ENCODE measurements at regions of chr7 and their contacts with region 1.

Region 1: DNA sequence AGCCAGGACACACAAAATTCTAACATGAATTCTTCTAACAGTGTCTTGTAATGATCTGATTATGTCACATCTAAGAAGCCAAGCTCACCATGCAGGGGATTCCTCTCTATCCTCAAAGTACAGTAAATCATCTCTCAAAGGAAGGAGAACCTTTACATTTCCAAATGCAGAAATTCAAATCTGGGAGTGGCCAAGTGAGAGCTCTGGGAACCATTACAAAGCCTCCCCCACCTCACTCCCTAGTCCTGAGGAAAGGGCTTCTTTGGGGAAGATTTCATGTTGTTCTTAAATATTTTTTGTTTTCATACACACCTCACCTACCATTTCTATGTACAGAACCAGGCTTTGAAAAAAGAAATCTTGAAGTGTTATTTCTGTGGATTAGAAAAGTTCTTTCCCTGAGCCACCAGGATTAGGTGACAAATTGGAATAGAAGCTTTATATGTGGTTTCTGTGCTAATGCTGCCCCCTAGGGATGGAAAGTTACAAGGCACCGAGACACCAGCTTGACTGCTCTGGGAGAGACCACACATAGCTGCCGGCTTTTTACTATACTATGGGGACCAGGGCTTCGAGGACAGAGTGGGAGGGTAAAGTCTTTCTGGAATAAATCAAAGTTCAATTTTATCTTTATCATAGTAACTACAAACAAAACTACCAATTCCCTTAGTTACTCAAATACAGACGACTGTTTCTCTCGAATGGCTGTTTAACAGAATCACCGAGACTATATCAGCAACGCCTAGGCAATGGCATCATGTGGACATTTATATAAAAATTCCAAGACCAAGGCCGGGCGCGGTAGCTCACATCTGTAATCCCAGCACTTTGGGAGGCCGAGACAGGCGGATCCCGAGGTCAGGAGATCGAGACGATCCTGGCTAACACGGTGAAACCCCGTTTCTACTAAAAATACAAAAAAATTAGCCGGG is 116.1 kb downstream of the RNF216 start:
- DNase-seq: peak; percentile 44
- H3K4me3 ChIP-seq: no peak overlapping the region
- H3K27ac ChIP-seq: no peak overlapping the region
- H3K27me3 ChIP-seq: no peaks in the 10 kb centered on the region
- CTCF ChIP-seq: peak; percentile 86

Region 2: DNA sequence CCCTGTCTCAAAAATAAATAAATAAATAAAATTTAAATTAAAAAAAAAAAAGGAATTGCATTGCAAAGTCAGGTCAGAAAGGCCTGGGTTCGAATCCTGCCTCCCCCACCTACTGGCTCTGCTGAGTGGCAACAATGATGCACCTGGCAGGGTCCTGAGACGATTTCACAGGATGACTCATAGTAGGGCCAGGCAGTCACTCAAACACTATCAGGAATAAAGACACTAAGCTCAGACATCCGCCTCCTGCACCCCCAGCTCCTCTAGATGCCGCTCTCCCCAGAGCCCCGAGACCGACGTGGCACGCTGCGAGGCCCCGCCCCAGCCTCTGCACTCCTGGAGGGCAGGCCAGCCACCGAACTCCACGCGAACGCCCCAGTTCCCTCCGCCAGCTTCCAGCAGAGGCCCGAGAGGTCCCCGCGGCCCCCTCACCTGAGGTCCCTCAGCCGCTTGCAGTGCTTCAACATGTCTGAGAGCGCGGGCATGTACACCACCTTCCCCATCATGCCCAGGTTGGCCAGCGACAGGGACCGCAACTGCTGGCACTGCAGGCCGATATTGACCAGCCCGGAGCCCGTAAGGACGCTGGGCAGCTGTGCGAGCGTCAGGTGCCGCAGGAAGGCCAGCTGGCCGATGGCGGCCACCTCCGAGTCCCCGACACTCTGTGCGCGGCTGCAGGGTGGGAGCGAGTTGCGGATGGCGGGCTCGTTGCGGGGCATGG is 165.1 kb before region 1 on chr7:
- CTCF ChIA-PET with region 1: interaction called, 50 read pairs
- POLR2A ChIA-PET with region 1: interaction called, 12 read pairs
- DNase-seq: no peak
- H3K4me3 ChIP-seq: no peak overlapping the region
- H3K27ac ChIP-seq: no peak overlapping the region
- H3K27me3 ChIP-seq: no peaks in the 10 kb centered on the region
- CTCF ChIP-seq: no peak

Region 3: DNA sequence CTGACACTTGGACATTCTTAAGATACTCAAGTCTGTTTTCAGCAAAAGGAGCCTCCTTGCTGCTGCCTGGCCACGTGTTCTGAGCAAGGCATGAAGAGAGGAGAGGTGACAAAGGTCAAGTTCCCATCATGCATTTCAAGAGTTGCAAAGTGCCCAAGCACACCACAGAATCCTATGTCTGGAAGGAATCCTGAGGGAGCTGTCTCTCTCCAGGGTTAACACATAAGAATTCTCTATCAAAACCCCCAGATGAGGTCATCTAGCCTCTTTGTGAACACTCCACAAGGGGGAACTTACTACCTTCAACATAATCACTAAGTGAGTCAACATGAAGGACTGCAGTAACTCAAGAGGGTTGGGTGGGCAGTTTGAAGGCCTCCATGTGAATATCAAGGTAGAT is 39.4 kb before region 1 on chr7:
- CTCF ChIA-PET with region 1: interaction called, 10 read pairs
- POLR2A ChIA-PET with region 1: no interaction called
- DNase-seq: peak; percentile 74
- H3K4me3 ChIP-seq: no peak overlapping the region
- H3K27ac ChIP-seq: peak overlapping the region; percentile 77
- H3K27me3 ChIP-seq: no peaks in the 10 kb centered on the region
- CTCF ChIP-seq: peak; percentile 44

Region 4: GRCh38 chr7:5646852-5647251 is 18.5 kb before region 1 on chr7:
- CTCF ChIA-PET with region 1: interaction called, 24 read pairs
- POLR2A ChIA-PET with region 1: no interaction called
- DNase-seq: peak; percentile 36
- H3K4me3 ChIP-seq: no peak overlapping the region
- H3K27ac ChIP-seq: no peak overlapping the region
- H3K27me3 ChIP-seq: no peaks in the 10 kb centered on the region
- CTCF ChIP-seq: no peak

Region 5: DNA sequence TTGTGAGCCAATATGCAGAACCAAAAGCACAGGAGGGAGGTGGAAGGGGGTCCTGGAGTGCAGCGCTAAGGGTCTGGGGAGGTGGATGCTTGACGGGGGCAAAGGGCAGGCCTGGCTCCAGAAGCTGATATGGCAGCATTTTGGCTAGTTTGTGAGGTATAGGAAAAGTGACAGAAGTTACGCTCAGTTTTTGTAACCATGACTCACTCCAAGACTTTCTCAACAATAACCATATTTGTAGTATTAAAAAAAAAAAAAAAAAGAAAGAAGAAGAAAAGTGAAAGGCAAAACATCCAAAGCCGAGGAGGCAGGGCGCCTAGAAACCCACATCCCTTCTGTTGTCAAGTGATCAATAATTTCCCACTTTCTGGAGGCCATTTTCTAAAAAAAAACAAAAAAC is 23.8 kb after region 1 on chr7:
- CTCF ChIA-PET with region 1: interaction called, 12 read pairs
- POLR2A ChIA-PET with region 1: interaction called, 4 read pairs
- DNase-seq: no peak
- H3K4me3 ChIP-seq: no peak overlapping the region
- H3K27ac ChIP-seq: peak overlapping the region; percentile 68
- H3K27me3 ChIP-seq: no peaks in the 10 kb centered on the region
- CTCF ChIP-seq: no peak

Region 6: DNA sequence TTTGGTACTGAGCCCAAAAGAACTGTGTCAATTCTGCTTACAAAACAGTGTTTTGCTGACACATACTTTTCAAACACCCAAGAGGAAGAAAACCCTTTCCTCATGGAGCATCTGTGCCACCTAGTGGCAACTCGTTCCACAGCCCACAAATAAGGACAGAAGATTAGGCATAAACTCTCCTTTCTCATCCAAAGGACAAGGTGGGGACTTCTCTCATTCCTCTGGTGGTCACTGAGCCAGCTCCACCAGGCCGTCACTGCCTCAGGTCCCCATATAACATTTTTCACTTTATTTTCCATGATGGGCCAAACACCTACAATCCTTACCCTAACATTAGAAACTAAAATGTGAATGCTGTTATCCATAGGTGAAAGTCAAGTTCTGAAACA is 39.2 kb after region 1 on chr7:
- CTCF ChIA-PET with region 1: interaction called, 32 read pairs
- POLR2A ChIA-PET with region 1: no interaction called
- DNase-seq: peak; percentile 69
- H3K4me3 ChIP-seq: no peak overlapping the region
- H3K27ac ChIP-seq: no peak overlapping the region
- H3K27me3 ChIP-seq: no peaks in the 10 kb centered on the region
- CTCF ChIP-seq: peak; percentile 96

Measured in AG04450 (cell line).